A673 (cell line): ENCODE measurements at regions of chr19 and their contacts with region 1.

Region 1: GRCh38 chr19:5775668-5776309 is 8.8 kb downstream of the PRR22 start:
- DNase-seq: peak; percentile 31
- H3K4me3 ChIP-seq: no peak overlapping the region
- H3K27ac ChIP-seq: no peak overlapping the region
- H3K4me1 ChIP-seq: peaks cover 5% of the 10 kb centered on the region
- H3K27me3 ChIP-seq: no peaks in the 10 kb centered on the region
- CTCF ChIP-seq: no peak

Region 2: GRCh38 chr19:5753743-5754142 is 22.0 kb before region 1 on chr19:
- CTCF ChIA-PET with region 1: no interaction called
- POLR2A ChIA-PET with region 1: no interaction called
- intact Hi-C with region 1: no loop called
- DNase-seq: no peak
- H3K4me3 ChIP-seq: no peak overlapping the region
- H3K27ac ChIP-seq: no peak overlapping the region
- H3K4me1 ChIP-seq: no peaks in the 10 kb centered on the region
- H3K27me3 ChIP-seq: no peaks in the 10 kb centered on the region
- CTCF ChIP-seq: no peak

Region 3: GRCh38 chr19:5789351-5789761 is 13.6 kb after region 1 on chr19:
- CTCF ChIA-PET with region 1: interaction called, 19 read pairs
- POLR2A ChIA-PET with region 1: interaction called, 20 read pairs
- intact Hi-C with region 1: no loop called
- DNase-seq: no peak
- H3K4me3 ChIP-seq: no peak overlapping the region
- H3K27ac ChIP-seq: no peak overlapping the region
- H3K4me1 ChIP-seq: peaks cover 7% of the 10 kb centered on the region
- H3K27me3 ChIP-seq: no peaks in the 10 kb centered on the region
- CTCF ChIP-seq: no peak

Region 4: GRCh38 chr19:5904352-5905113 is 128.7 kb after region 1 on chr19 and contains the start of gene VMAC:
- CTCF ChIA-PET with region 1: no interaction called
- POLR2A ChIA-PET with region 1: interaction called, 10 read pairs
- intact Hi-C with region 1: no loop called
- DNase-seq: peak; percentile 100
- H3K4me3 ChIP-seq: peak within 1 kb of the TSS; percentile 95
- H3K27ac ChIP-seq: peak within 1 kb of the TSS; percentile 96
- H3K4me1 ChIP-seq: peaks cover 8% of the 10 kb centered on the region
- H3K27me3 ChIP-seq: no peaks in the 10 kb centered on the region
- CTCF ChIP-seq: no peak
- total RNA-seq, gene VMAC: 0.67 and 1.7 TPM in 2 replicates

Region 5: GRCh38 chr19:6087074-6087571 is 311.3 kb after region 1 on chr19:
- CTCF ChIA-PET with region 1: interaction called, 16 read pairs
- POLR2A ChIA-PET with region 1: no interaction called
- intact Hi-C with region 1: no loop called
- DNase-seq: no peak
- H3K4me3 ChIP-seq: no peak overlapping the region
- H3K27ac ChIP-seq: no peak overlapping the region
- H3K4me1 ChIP-seq: peaks cover 29% of the 10 kb centered on the region
- H3K27me3 ChIP-seq: no peaks in the 10 kb centered on the region
- CTCF ChIP-seq: no peak